ENCODE measurements at regions of chr1 and their contacts with region 1.

Region 1: DNA sequence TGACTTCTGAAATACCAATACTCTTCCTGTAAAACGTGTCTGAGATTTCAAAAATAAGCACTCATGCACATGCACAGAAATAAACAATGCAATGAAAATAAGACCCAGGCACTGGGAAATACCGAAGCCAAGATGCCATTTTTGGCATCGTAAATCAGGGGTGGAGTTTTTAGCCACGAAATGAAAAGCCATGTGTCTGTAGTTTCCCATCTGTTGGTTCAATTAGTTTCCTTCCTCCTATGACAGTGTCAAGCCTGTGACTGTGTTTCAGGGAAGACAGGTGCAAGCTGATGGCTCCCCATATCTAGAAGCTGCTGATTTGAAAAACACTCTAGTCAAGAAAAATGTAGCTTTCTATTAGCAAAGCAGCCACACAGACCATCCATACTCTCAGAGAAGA is 480.4 kb upstream of the CAMK1G start:
- DNase-seq: no peak
- H3K4me3 ChIP-seq: no peak overlapping the region
- CTCF ChIP-seq: no peak

Region 2: GRCh38 chr1:209150114-209150513 is 47.0 kb after region 1 on chr1:
- in situ Hi-C with region 1: loop called (anchors 5 kb)
- DNase-seq: peak; percentile 73
- H3K4me3 ChIP-seq: no peak overlapping the region
- CTCF ChIP-seq: no peak

Measured in astrocyte of the cerebellum (primary cell).